PC-3 (cell line): ENCODE measurements at regions of chr5 and their contacts with region 1.

Region 1: GRCh38 chr5:42423285-42424165 is at the start of gene GHR:
- DNase-seq: peak; percentile 94
- ATAC-seq: peak; percentile 85
- H3K4me3 ChIP-seq: peak within 1 kb of the TSS; percentile 73
- H3K27ac ChIP-seq: peak within 1 kb of the TSS; percentile 12; the same call in 1 of the 2 replicates
- H3K4me1 ChIP-seq: peaks cover 10% of the 10 kb centered on the region; the same call in 1 of the 2 replicates
- H3K27me3 ChIP-seq: no peaks in the 10 kb centered on the region
- CTCF ChIP-seq: peak; percentile 84
- total RNA-seq, gene GHR: 2.2 and 5.2 TPM in 2 replicates

Region 2: GRCh38 chr5:42005561-42006153 is 417.9 kb before region 1 on chr5:
- CTCF ChIA-PET with region 1: no interaction called
- POLR2A ChIA-PET with region 1: no interaction called
- intact Hi-C with region 1: loop called (anchors 1 kb)
- DNase-seq: peak; percentile 62
- ATAC-seq: peak; percentile 49
- H3K4me3 ChIP-seq: no peak overlapping the region
- H3K27ac ChIP-seq: no peak overlapping the region
- H3K4me1 ChIP-seq: no peaks in the 10 kb centered on the region
- H3K27me3 ChIP-seq: no peaks in the 10 kb centered on the region
- CTCF ChIP-seq: peak; percentile 88

Region 3: DNA sequence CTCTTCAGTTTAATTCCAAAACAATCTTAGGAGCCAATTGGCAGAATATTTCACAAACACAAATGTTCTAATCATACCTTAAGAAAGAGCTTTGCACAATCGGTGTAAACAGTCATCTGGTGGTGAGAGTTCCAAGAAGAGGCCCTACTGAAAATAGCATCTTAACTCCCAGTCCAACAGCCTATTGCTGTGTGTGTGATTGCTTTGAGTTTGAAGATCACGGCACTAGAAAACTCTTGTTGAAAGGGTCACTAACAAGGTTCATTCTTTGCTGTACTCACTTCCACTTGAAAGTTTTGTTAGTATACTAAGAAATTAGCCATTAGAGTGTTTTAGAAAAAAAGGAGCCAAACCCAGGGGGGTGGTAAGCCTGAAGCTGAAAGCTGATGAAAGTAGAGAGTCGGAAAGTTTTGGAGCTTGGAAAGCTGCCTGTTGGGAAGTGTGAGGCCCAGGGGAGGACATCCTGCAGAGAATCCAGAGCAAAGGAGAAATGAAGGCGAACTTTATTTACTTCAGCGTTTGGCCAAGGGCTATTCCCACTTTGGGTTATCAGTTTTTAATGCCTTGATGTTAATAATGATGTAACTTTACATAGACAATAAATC is 180.5 kb before region 1 on chr5:
- CTCF ChIA-PET with region 1: interaction called, 3 read pairs
- POLR2A ChIA-PET with region 1: no interaction called
- intact Hi-C with region 1: loop called (anchors 5 kb)
- DNase-seq: no peak
- ATAC-seq: no peak
- H3K4me3 ChIP-seq: no peak overlapping the region
- H3K27ac ChIP-seq: peak overlapping the region; percentile 82
- H3K4me1 ChIP-seq: peaks cover 31% of the 10 kb centered on the region
- H3K27me3 ChIP-seq: no peaks in the 10 kb centered on the region
- CTCF ChIP-seq: no peak

Region 4: GRCh38 chr5:42360056-42360455 is 63.5 kb before region 1 on chr5:
- CTCF ChIA-PET with region 1: interaction called, 6 read pairs
- POLR2A ChIA-PET with region 1: interaction called, 3 read pairs
- intact Hi-C with region 1: loop called (anchors 2 kb)
- DNase-seq: peak; percentile 95
- ATAC-seq: peak; percentile 93
- H3K4me3 ChIP-seq: peak overlapping the region; percentile 4; the same call in 1 of the 2 replicates
- H3K27ac ChIP-seq: peak overlapping the region; percentile 86
- H3K4me1 ChIP-seq: peaks cover 26% of the 10 kb centered on the region
- H3K27me3 ChIP-seq: no peaks in the 10 kb centered on the region
- CTCF ChIP-seq: no peak

Region 5: GRCh38 chr5:42583322-42583721 is 159.8 kb after region 1 on chr5:
- CTCF ChIA-PET with region 1: interaction called, 21 read pairs
- POLR2A ChIA-PET with region 1: no interaction called
- intact Hi-C with region 1: loop called (anchors 1 kb)
- DNase-seq: peak; percentile 77
- ATAC-seq: peak; percentile 70
- H3K4me3 ChIP-seq: no peak overlapping the region
- H3K27ac ChIP-seq: no peak overlapping the region
- H3K4me1 ChIP-seq: no peaks in the 10 kb centered on the region; the same call in 1 of the 2 replicates
- H3K27me3 ChIP-seq: no peaks in the 10 kb centered on the region
- CTCF ChIP-seq: peak; percentile 97

Region 6: DNA sequence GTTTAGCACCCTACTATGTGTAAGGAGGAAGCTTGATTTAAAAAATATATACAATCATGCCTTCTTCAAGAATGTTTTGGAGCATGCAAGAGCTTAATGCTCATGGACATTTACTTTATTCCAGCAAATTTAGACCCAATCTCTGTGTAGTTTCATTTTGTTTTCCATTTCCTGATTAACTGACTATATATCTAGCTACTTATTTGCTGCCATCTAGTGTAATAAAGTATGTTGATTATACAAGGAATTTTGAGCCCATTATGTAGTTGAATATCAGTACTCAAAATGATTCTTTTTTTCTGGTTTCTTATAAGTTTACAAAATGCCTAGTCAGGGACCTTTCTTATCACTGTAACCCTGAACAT is 233.1 kb after region 1 on chr5:
- CTCF ChIA-PET with region 1: interaction called, 10 read pairs
- POLR2A ChIA-PET with region 1: no interaction called
- intact Hi-C with region 1: loop called (anchors 1 kb)
- DNase-seq: peak; percentile 58
- ATAC-seq: peak; percentile 80
- H3K4me3 ChIP-seq: peak overlapping the region; percentile 44
- H3K27ac ChIP-seq: no peak overlapping the region
- H3K4me1 ChIP-seq: peaks cover 7% of the 10 kb centered on the region; the same call in 1 of the 2 replicates
- H3K27me3 ChIP-seq: no peaks in the 10 kb centered on the region
- CTCF ChIP-seq: peak; percentile 76

Region 7: GRCh38 chr5:42889311-42889933 is 465.9 kb after region 1 on chr5:
- CTCF ChIA-PET with region 1: no interaction called
- POLR2A ChIA-PET with region 1: no interaction called
- intact Hi-C with region 1: loop called (anchors 5 kb)
- DNase-seq: peak; percentile 96
- ATAC-seq: peak; percentile 89
- H3K4me3 ChIP-seq: no peak overlapping the region
- H3K27ac ChIP-seq: no peak overlapping the region
- H3K4me1 ChIP-seq: peaks cover 20% of the 10 kb centered on the region
- H3K27me3 ChIP-seq: no peaks in the 10 kb centered on the region
- CTCF ChIP-seq: peak; percentile 97